A673 (cell line): ENCODE measurements at regions of chr6 and their contacts with region 1.

Region 1: DNA sequence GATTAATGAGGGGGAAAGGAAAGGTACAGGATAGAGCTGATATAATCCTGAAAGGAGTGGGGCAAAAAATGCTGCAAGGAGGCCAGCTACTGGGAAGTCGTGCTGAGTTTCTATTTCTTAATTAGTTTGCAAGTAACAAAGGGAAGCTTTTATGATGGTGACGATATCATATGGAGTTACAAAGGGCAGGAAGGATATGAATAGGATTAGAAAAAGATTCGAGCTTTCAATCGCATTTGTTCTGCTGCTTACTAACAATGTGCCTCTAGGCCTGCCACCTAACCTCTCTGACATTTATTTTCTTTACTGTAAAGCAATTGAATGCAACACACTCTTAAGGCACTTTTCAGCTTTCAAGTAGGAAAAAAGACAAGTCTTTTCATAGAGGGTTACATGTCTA is 219.2 kb downstream of the CLVS2 start:
- DNase-seq: peak; percentile 98
- H3K4me3 ChIP-seq: no peak overlapping the region
- H3K27ac ChIP-seq: peak overlapping the region; percentile 99
- H3K4me1 ChIP-seq: peaks cover 67% of the 10 kb centered on the region
- H3K27me3 ChIP-seq: no peaks in the 10 kb centered on the region
- CTCF ChIP-seq: no peak

Region 2: GRCh38 chr6:122869437-122870024 is 345.7 kb before region 1 on chr6:
- CTCF ChIA-PET with region 1: interaction called, 3 read pairs
- POLR2A ChIA-PET with region 1: no interaction called
- intact Hi-C with region 1: loop called (anchors 2 kb)
- DNase-seq: peak; percentile 91
- H3K4me3 ChIP-seq: no peak overlapping the region
- H3K27ac ChIP-seq: peak overlapping the region; percentile 59
- H3K4me1 ChIP-seq: peaks cover 54% of the 10 kb centered on the region
- H3K27me3 ChIP-seq: no peaks in the 10 kb centered on the region
- CTCF ChIP-seq: peak; percentile 87

Region 3: GRCh38 chr6:122977180-122977579 is 238.0 kb before region 1 on chr6:
- CTCF ChIA-PET with region 1: no interaction called
- POLR2A ChIA-PET with region 1: no interaction called
- intact Hi-C with region 1: no loop called
- DNase-seq: no peak
- H3K4me3 ChIP-seq: no peak overlapping the region
- H3K27ac ChIP-seq: no peak overlapping the region
- H3K4me1 ChIP-seq: no peaks in the 10 kb centered on the region
- H3K27me3 ChIP-seq: no peaks in the 10 kb centered on the region
- CTCF ChIP-seq: no peak

Region 4: GRCh38 chr6:122995921-122996793 is 219.1 kb before region 1 on chr6 and contains the start of gene CLVS2:
- CTCF ChIA-PET with region 1: no interaction called
- POLR2A ChIA-PET with region 1: no interaction called
- intact Hi-C with region 1: loop called (anchors 2 kb)
- DNase-seq: peak; percentile 95
- H3K4me3 ChIP-seq: peak within 1 kb of the TSS; percentile 86
- H3K27ac ChIP-seq: peak within 1 kb of the TSS; percentile 80
- H3K4me1 ChIP-seq: peaks cover 18% of the 10 kb centered on the region
- H3K27me3 ChIP-seq: no peaks in the 10 kb centered on the region
- CTCF ChIP-seq: no peak
- total RNA-seq, gene CLVS2: 84.9 and 89.6 TPM in 2 replicates

Region 5: GRCh38 chr6:123016431-123017103 is 198.6 kb before region 1 on chr6:
- CTCF ChIA-PET with region 1: no interaction called
- POLR2A ChIA-PET with region 1: no interaction called
- intact Hi-C with region 1: no loop called
- DNase-seq: peak; percentile 75
- H3K4me3 ChIP-seq: no peak overlapping the region
- H3K27ac ChIP-seq: no peak overlapping the region
- H3K4me1 ChIP-seq: peaks cover 23% of the 10 kb centered on the region
- H3K27me3 ChIP-seq: no peaks in the 10 kb centered on the region
- CTCF ChIP-seq: no peak

Region 6: GRCh38 chr6:123089244-123089643 is 126.0 kb before region 1 on chr6:
- CTCF ChIA-PET with region 1: no interaction called
- POLR2A ChIA-PET with region 1: no interaction called
- intact Hi-C with region 1: loop called (anchors 10 kb)
- DNase-seq: no peak
- H3K4me3 ChIP-seq: no peak overlapping the region
- H3K27ac ChIP-seq: no peak overlapping the region
- H3K4me1 ChIP-seq: peaks cover 13% of the 10 kb centered on the region
- H3K27me3 ChIP-seq: no peaks in the 10 kb centered on the region
- CTCF ChIP-seq: no peak

Region 7: DNA sequence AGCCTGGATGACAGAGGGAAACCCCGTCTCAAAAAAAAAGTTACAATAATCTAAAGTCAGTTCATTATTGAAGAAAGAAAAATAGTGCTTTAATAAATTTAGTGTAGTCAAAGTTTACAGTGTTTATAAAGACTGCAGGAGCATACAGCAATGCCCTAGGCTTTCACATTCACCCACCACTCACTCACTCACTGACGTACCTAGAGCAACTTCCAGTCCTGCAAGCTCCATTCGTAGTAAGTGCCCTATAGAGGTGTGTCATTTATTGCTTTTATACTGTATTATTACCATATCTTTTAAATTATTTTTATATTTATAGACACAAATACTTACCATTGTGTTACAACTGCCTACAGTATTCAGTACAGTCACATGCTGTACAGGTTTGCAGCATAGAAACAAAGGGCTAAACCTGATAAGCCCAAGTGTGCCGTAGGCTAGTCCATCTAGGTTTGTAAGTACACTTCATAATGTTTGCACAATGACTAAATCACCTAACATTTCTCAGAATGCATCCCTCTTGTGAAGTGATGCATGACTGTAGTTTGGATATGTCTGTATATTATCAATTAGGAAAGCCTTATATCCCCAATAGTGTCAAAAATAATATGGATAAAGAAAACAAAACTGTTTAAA is 96.5 kb before region 1 on chr6:
- CTCF ChIA-PET with region 1: no interaction called
- POLR2A ChIA-PET with region 1: no interaction called
- intact Hi-C with region 1: loop called (anchors 5 kb)
- DNase-seq: no peak
- H3K4me3 ChIP-seq: no peak overlapping the region
- H3K27ac ChIP-seq: no peak overlapping the region
- H3K4me1 ChIP-seq: no peaks in the 10 kb centered on the region
- H3K27me3 ChIP-seq: no peaks in the 10 kb centered on the region
- CTCF ChIP-seq: no peak

Region 8: GRCh38 chr6:123829302-123829953 is 614.2 kb after region 1 on chr6:
- CTCF ChIA-PET with region 1: no interaction called
- POLR2A ChIA-PET with region 1: no interaction called
- intact Hi-C with region 1: no loop called
- DNase-seq: peak; percentile 11
- H3K4me3 ChIP-seq: no peak overlapping the region
- H3K27ac ChIP-seq: no peak overlapping the region
- H3K4me1 ChIP-seq: peaks cover 8% of the 10 kb centered on the region
- H3K27me3 ChIP-seq: peaks cover 91% of the 10 kb centered on the region
- CTCF ChIP-seq: no peak

Region 9: DNA sequence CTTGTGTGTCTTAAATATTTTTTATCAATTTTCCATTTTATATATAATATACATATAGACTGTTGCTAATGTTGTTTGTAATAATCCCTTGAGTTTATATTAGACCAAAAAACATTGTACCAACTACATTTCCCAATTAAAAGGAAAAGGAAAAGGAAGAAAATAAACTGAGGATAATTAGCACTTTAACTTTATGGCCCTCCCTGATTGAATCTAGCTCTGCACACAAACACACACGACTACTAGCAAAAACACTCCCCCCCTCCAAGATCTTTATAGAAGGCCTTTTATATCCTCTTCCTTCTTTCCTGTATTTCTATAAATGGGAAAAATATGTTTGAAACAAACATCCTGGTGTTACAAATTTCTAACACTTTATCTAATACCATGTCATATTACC is 865.3 kb after region 1 on chr6:
- CTCF ChIA-PET with region 1: no interaction called
- POLR2A ChIA-PET with region 1: no interaction called
- intact Hi-C with region 1: no loop called
- DNase-seq: no peak
- H3K4me3 ChIP-seq: no peak overlapping the region
- H3K27ac ChIP-seq: no peak overlapping the region
- H3K4me1 ChIP-seq: peaks cover 11% of the 10 kb centered on the region
- H3K27me3 ChIP-seq: no peaks in the 10 kb centered on the region
- CTCF ChIP-seq: no peak

Region 10: GRCh38 chr6:124777863-124778262 is 1562.7 kb after region 1 on chr6:
- CTCF ChIA-PET with region 1: no interaction called
- POLR2A ChIA-PET with region 1: no interaction called
- intact Hi-C with region 1: loop called (anchors 2 kb)
- DNase-seq: peak; percentile 48
- H3K4me3 ChIP-seq: no peak overlapping the region
- H3K27ac ChIP-seq: peak overlapping the region; percentile 98
- H3K4me1 ChIP-seq: peaks cover 64% of the 10 kb centered on the region
- H3K27me3 ChIP-seq: no peaks in the 10 kb centered on the region
- CTCF ChIP-seq: no peak